ENCODE measurements at regions of chr20 and their contacts with region 1.

Region 1: GRCh38 chr20:40689943-40690835 is 1.2 kb upstream of the MAFB start:
- DNase-seq: peak; percentile 97
- H3K4me3 ChIP-seq: peak overlapping the region; percentile 80
- H3K27ac ChIP-seq: peak overlapping the region; percentile 93
- H3K4me1 ChIP-seq: no peaks in the 10 kb centered on the region
- H3K27me3 ChIP-seq: no peaks in the 10 kb centered on the region; the same call in 1 of the 2 replicates

Region 2: GRCh38 chr20:39892983-39893685 is 797.1 kb before region 1 on chr20:
- in situ Hi-C with region 1: loop called (anchors 10 kb)
- DNase-seq: peak; percentile 79
- H3K4me3 ChIP-seq: no peak overlapping the region
- H3K27ac ChIP-seq: peak overlapping the region; percentile 31
- H3K4me1 ChIP-seq: peaks cover 33% of the 10 kb centered on the region
- H3K27me3 ChIP-seq: no peaks in the 10 kb centered on the region

Region 3: GRCh38 chr20:40156600-40157317 is 533.4 kb before region 1 on chr20:
- in situ Hi-C with region 1: loop called (anchors 10 kb)
- DNase-seq: no peak
- H3K4me3 ChIP-seq: no peak overlapping the region
- H3K27ac ChIP-seq: no peak overlapping the region
- H3K4me1 ChIP-seq: no peaks in the 10 kb centered on the region
- H3K27me3 ChIP-seq: peaks cover 2% of the 10 kb centered on the region; the same call in 1 of the 2 replicates

Region 4: GRCh38 chr20:40265825-40266533 is 424.2 kb before region 1 on chr20:
- in situ Hi-C with region 1: loop called (anchors 10 kb)
- DNase-seq: peak; percentile 72
- H3K4me3 ChIP-seq: no peak overlapping the region
- H3K27ac ChIP-seq: no peak overlapping the region
- H3K4me1 ChIP-seq: no peaks in the 10 kb centered on the region
- H3K27me3 ChIP-seq: no peaks in the 10 kb centered on the region